Transverse colon (tissue), 4 donors: ENCODE measurements at regions of chr1 and their contacts with region 1.

Region 1: DNA sequence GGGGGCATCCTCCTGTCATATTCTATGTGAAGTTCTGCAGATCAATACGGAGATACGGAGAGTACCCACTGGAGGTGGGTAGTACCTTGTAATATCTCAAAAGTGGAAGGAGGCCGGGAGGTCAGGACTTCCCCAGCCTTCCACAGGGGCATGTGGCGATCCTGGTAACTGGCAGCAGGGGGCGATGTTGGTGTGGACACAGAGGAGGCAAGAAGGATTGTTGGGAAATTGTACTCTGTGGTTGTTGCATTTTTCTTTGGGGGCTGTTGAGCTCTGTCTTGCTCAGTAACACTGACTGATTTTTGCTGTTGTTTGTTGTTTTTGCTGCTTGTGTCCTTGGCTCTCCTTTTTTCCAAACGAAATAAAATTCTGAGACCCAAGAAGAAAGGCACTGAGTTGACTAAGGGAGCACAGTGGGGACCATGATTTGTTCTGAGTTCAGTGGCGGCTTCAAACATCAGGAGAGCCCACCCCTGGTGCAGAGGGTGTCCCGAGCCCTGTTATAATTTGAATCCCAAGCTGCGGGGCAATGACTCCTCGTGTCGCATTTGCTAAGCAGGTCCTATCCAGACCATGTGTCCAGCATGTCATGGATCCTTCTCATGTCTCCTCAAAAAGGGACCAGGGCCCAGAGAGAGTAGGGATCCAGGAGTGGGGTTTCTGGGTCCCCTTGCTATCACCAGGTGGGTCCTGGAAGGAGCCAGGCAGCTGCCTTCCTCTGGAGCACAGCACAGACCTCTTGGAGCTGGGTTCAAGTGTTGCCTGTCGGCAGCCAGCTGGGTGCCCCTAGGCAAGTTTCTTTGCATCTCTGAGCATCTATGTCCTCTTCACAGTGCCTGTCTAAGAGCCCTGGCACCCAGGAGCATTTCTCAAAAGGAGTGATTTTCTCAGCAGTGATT is 22.8 kb downstream of the LHX4 start:
- DNase-seq: peak; percentile 84
- H3K4me3 ChIP-seq: no peak overlapping the region
- H3K27ac ChIP-seq: no peak overlapping the region
- H3K4me1 ChIP-seq: no peaks in the 10 kb centered on the region
- H3K27me3 ChIP-seq: peaks cover 38% of the 10 kb centered on the region
- CTCF ChIP-seq: peak; percentile 76 to 95 (median 81)
- EP300 ChIP-seq: no peak
- POLR2A ChIP-seq: no peak

Region 2: GRCh38 chr1:180415985-180416633 is 163.2 kb after region 1 on chr1:
- in situ Hi-C with region 1: loop called in 3 of 4 experiments (anchors 5 to 10 kb)
- intact Hi-C with region 1: no loop called
- DNase-seq: no peak
- H3K4me3 ChIP-seq: no peak overlapping the region
- H3K27ac ChIP-seq: no peak overlapping the region
- H3K4me1 ChIP-seq: no peaks in the 10 kb centered on the region
- H3K27me3 ChIP-seq: no peaks in the 10 kb centered on the region
- CTCF ChIP-seq: peak; percentile 39 to 71 (median 62)
- EP300 ChIP-seq: no peak
- POLR2A ChIP-seq: no peak

Region 3: GRCh38 chr1:180470031-180470430 is 217.1 kb after region 1 on chr1:
- in situ Hi-C with region 1: loop called in 3 of 4 experiments (anchors 5 to 25 kb)
- intact Hi-C with region 1: loop called (anchors 10 kb)
- DNase-seq: no peak
- H3K4me3 ChIP-seq: no peak overlapping the region
- H3K27ac ChIP-seq: no peak overlapping the region
- H3K4me1 ChIP-seq: no peaks in the 10 kb centered on the region
- H3K27me3 ChIP-seq: no peaks in the 10 kb centered on the region
- CTCF ChIP-seq: no peak
- EP300 ChIP-seq: no peak
- POLR2A ChIP-seq: no peak

Region 4: DNA sequence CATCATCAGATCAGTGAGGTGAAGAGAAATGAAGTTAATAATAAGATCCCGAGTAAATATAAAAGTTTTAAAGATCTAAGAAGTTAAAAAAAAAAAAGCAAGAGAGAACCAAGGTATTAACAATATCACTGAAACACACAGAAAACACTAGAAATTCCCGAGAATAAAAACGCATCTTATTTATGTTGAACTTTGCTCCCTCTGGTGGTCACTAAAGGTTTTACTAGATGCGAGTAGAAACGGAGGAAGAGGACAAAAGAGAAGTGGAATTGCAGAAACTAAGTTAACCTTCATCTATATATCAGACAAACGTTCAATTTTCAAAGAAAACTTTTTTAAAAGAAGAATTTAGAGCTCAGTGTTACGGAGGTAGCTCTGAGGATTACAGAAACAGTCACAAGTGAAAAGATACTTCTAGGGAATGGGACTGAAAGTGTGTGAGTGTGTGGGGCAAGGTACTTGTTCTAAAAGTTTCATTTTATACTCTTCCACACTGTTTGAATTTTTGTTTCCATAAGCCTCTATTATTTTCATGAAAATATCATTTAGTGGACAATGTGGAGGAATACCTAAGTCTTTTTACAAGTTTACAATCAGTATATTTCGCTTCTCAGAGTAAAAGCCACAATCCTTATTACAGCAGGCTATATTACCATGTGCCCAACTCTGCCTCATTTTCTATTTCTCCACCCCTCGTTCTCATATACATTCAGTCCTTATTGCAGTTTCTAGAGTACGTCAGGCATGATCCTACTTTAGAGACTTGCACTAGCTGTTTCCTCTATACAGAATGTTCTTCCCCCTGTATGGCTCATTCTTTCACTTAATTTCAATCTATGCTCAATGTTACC is 229.8 kb after region 1 on chr1:
- in situ Hi-C with region 1: loop called (anchors 5 to 25 kb)
- intact Hi-C with region 1: loop called (anchors 10 kb)
- DNase-seq: no peak
- H3K4me3 ChIP-seq: no peak overlapping the region
- H3K27ac ChIP-seq: no peak overlapping the region
- H3K4me1 ChIP-seq: peaks cover 0 to 9% (median 2%) of the 10 kb centered on the region in 4 donors
- H3K27me3 ChIP-seq: no peaks in the 10 kb centered on the region
- CTCF ChIP-seq: peak; percentile 62 to 82 (median 65)
- EP300 ChIP-seq: no peak
- POLR2A ChIP-seq: no peak